Breast epithelium (tissue), 4 donors: ENCODE measurements at regions of chr3 and their contacts with region 1.

Region 1: DNA sequence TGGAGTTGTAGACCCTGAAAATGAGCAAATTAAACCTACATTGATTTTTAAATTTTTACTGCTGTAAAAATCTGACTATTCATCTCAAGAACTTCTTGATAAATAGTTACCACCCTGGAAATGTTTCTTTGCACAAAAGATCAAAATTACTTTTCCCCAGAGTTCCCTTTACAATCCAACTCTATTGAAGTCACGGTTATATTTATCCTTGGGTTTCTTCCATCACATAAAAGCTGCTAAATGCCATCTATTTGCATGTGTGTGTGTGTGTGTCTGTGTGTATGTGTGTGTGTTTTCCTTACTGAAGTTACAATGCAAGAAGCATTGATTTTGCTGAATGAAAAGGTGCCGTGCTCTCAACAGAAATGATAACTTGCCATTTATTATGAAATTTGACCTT is 1273.0 kb downstream of the ROBO2 start:
- DNase-seq: no peak
- H3K4me3 ChIP-seq: no peak overlapping the region
- H3K27ac ChIP-seq: no peak overlapping the region
- H3K4me1 ChIP-seq: no peaks in the 10 kb centered on the region
- H3K27me3 ChIP-seq: no peaks in the 10 kb centered on the region
- CTCF ChIP-seq: no peak
- POLR2A ChIP-seq: no peak

Region 2: DNA sequence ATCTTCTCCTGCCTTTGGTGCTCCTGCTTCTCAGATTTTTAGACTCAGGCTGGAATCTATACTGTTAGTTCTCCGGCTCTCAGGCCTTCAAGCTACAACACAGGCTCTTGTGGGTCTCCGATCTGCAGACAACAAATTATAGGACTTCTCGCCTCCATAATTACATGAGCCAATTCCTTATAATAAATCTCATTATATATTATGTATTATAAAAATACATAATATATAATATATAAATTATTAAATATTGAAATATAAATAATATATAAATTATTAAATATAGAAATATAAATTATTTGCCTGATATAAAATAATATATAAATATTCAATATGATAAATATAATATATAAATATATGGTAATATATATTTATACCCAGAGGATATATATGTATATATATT is 59.0 kb before region 1 on chr3:
- intact Hi-C with region 1: loop called (anchors 2 kb)
- DNase-seq: no peak
- H3K4me3 ChIP-seq: no peak overlapping the region
- H3K27ac ChIP-seq: no peak overlapping the region
- H3K4me1 ChIP-seq: no peaks in the 10 kb centered on the region
- H3K27me3 ChIP-seq: no peaks in the 10 kb centered on the region
- CTCF ChIP-seq: no peak
- POLR2A ChIP-seq: no peak

Region 3: GRCh38 chr3:78287085-78287484 is 25.8 kb before region 1 on chr3:
- intact Hi-C with region 1: no loop called
- DNase-seq: no peak
- H3K4me3 ChIP-seq: no peak overlapping the region
- H3K27ac ChIP-seq: no peak overlapping the region
- H3K4me1 ChIP-seq: no peaks in the 10 kb centered on the region
- H3K27me3 ChIP-seq: no peaks in the 10 kb centered on the region
- CTCF ChIP-seq: no peak
- POLR2A ChIP-seq: no peak